ENCODE measurements at regions of chr18 and their contacts with region 1.

Region 1: GRCh38 chr18:47150029-47150823 is at the start of gene HDHD2:
- H3K4me3 Mint-ChIP-seq: peak within 1 kb of the TSS; percentile 98
- H3K27ac Mint-ChIP-seq: peak within 1 kb of the TSS; percentile 98
- H3K4me1 Mint-ChIP-seq: peaks cover 31% of the 10 kb centered on the region
- H3K27me3 Mint-ChIP-seq: no peaks in the 10 kb centered on the region

Region 2: DNA sequence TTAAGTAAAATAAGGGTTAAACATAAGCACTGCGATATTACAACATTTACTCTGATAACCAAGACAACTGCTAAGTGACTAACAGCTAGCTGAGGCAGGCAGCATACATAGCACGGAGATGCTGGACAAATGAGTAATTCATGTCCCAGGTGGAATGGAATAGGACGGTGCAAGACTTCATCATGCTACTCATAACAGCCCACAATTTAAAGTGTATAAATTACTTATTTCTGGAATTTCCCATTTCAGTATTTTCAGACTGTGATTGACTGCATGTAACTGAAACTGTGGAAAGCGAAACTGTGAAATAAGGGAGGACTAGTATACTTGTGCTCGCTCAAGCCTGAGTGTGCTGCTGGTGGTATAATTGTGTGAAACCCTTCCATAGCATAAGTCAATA is 13.0 kb after region 1 on chr18:
- intact Hi-C with region 1: no loop called
- H3K4me3 Mint-ChIP-seq: no peak overlapping the region
- H3K27ac Mint-ChIP-seq: no peak overlapping the region
- H3K4me1 Mint-ChIP-seq: peaks cover 10% of the 10 kb centered on the region
- H3K27me3 Mint-ChIP-seq: no peaks in the 10 kb centered on the region

Region 3: GRCh38 chr18:47175908-47176575 is 25.8 kb after region 1 on chr18 and contains the start of gene IER3IP1:
- intact Hi-C with region 1: loop called (anchors 1 kb)
- H3K4me3 Mint-ChIP-seq: no peak within 1 kb of the TSS
- H3K27ac Mint-ChIP-seq: no peak within 1 kb of the TSS
- H3K4me1 Mint-ChIP-seq: no peaks in the 10 kb centered on the region
- H3K27me3 Mint-ChIP-seq: peaks cover 10% of the 10 kb centered on the region

Measured in dendritic cell treated with granulocyte-macrophage colony-stimulating factor and Interleukin-4, amounts not matched to agents 40 ng/mL and 50 ng/mL, for 4 days (primary cell).